ENCODE measurements at regions of chr1 and their contacts with region 1.

Region 1: DNA sequence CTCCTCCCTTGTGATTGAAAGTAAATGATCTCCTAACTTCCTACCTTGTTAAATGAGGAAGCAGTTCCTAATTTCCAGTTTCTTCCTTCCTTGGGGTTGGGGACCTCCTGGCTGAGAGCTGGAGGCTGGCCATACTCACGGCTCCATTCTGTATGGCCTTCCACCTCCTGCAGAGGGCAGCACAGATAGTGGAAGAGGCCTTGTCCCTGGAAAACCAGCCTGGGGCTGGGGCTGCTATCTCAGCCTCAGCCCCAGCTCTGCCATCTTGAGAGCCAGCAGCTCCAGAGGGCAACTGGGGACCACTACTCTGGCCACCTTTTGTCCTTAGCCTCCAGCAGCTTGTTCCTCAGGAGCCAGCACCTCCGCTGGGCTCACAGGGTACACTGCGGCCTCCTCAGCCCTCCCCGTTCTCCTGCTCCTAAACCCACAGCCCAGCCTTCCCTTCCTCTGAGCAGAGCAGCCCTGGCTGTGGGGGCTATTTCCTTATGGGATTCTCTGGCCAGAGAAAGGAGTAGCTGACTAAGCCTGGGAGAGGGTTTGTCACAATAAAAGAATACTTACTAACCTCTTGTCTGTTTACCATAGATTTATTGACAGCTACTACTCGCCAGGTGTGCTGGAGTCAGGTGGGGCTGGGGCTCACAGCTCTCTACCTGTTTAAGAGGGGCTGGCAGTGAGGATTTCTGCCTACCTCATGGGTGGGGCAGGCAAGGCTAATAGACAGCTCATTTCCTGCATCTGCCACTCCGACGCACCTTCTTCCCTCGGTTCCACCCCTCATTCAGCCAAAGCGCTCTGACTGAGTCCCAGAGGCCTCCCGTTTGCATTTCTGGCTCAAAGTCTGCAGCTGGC is 6.3 kb downstream of the TMEM234 start:
- DNase-seq: peak; percentile 71
- H3K4me3 Mint-ChIP-seq: no peak overlapping the region
- H3K27ac Mint-ChIP-seq: peak overlapping the region; percentile 72
- H3K4me1 Mint-ChIP-seq: peaks cover 24% of the 10 kb centered on the region
- H3K27me3 Mint-ChIP-seq: no peaks in the 10 kb centered on the region

Region 2: GRCh38 chr1:32144033-32144432 is 71.8 kb before region 1 on chr1:
- CTCF ChIA-PET with region 1: no interaction called
- POLR2A ChIA-PET with region 1: no interaction called
- DNase-seq: no peak
- H3K4me3 Mint-ChIP-seq: no peak overlapping the region
- H3K27ac Mint-ChIP-seq: no peak overlapping the region
- H3K4me1 Mint-ChIP-seq: peaks cover 41% of the 10 kb centered on the region
- H3K27me3 Mint-ChIP-seq: no peaks in the 10 kb centered on the region

Region 3: GRCh38 chr1:32192220-32192948 is 23.5 kb before region 1 on chr1:
- CTCF ChIA-PET with region 1: interaction called, 10 read pairs
- POLR2A ChIA-PET with region 1: interaction called, 5 read pairs
- DNase-seq: no peak
- H3K4me3 Mint-ChIP-seq: no peak overlapping the region
- H3K27ac Mint-ChIP-seq: no peak overlapping the region
- H3K4me1 Mint-ChIP-seq: peaks cover 55% of the 10 kb centered on the region
- H3K27me3 Mint-ChIP-seq: no peaks in the 10 kb centered on the region

Region 4: DNA sequence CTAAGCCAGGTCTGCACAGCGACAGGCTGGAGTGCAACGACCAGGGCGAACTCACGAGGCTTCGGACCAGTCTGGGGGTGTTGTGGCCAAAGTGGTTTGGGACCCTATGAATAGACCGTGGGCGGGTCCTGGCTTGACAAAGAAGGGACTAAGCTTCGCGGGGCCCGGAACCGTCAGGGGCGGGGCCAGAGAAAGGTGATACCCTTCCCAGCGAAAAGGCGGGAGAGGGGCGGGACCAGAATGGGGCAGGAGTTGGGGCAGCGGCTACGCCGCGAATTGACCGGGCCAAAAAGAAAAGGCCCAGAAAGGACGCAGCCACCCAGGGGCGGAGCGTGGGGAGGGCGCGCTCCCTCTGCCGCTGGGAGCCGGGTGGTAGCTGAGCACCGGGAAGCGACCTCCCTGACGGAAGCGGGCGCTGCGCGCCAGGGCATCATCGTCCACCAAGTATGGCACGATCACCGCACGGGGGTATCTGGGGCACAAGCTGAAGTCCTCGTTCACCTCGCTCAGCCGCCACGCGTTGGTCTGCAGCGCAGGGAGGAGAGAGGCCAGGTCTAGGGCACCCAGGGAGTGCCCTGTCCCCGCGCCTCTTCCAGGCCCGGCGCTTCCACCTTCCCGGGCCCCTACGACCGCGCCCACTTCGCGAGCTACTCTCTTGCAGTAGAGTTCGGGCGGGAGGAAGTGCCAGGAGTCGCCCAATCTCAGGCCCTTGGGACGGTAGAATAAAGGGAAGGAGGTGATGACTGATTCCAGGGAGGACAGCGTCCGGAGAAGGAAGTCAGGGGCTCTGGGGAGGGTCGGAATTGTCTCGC is 24.5 kb after region 1 on chr1:
- CTCF ChIA-PET with region 1: interaction called, 10 read pairs
- POLR2A ChIA-PET with region 1: interaction called, 14 read pairs
- DNase-seq: peak; percentile 54
- H3K4me3 Mint-ChIP-seq: peak overlapping the region; percentile 78
- H3K27ac Mint-ChIP-seq: no peak overlapping the region
- H3K4me1 Mint-ChIP-seq: peaks cover 19% of the 10 kb centered on the region
- H3K27me3 Mint-ChIP-seq: no peaks in the 10 kb centered on the region

Region 5: GRCh38 chr1:32291708-32292492 is 76.0 kb after region 1 on chr1 and contains the start of gene HDAC1:
- CTCF ChIA-PET with region 1: interaction called, 10 read pairs
- POLR2A ChIA-PET with region 1: interaction called, 7 read pairs
- DNase-seq: peak; percentile 98
- H3K4me3 Mint-ChIP-seq: peak within 1 kb of the TSS; percentile 91
- H3K27ac Mint-ChIP-seq: peak within 1 kb of the TSS; percentile 84
- H3K4me1 Mint-ChIP-seq: peaks cover 53% of the 10 kb centered on the region
- H3K27me3 Mint-ChIP-seq: no peaks in the 10 kb centered on the region
- total RNA-seq, gene HDAC1: 180 to 185 TPM

Region 6: GRCh38 chr1:32394141-32394889 is 178.5 kb after region 1 on chr1 and contains the start of gene BSDC1:
- CTCF ChIA-PET with region 1: interaction called, 24 read pairs
- POLR2A ChIA-PET with region 1: interaction called, 3 read pairs
- DNase-seq: peak; percentile 99
- H3K4me3 Mint-ChIP-seq: peak within 1 kb of the TSS; percentile 100
- H3K27ac Mint-ChIP-seq: peak within 1 kb of the TSS; percentile 98
- H3K4me1 Mint-ChIP-seq: peaks cover 30% of the 10 kb centered on the region
- H3K27me3 Mint-ChIP-seq: peaks cover 13% of the 10 kb centered on the region
- total RNA-seq, gene BSDC1: 52.5 to 52.6 TPM

Region 7: DNA sequence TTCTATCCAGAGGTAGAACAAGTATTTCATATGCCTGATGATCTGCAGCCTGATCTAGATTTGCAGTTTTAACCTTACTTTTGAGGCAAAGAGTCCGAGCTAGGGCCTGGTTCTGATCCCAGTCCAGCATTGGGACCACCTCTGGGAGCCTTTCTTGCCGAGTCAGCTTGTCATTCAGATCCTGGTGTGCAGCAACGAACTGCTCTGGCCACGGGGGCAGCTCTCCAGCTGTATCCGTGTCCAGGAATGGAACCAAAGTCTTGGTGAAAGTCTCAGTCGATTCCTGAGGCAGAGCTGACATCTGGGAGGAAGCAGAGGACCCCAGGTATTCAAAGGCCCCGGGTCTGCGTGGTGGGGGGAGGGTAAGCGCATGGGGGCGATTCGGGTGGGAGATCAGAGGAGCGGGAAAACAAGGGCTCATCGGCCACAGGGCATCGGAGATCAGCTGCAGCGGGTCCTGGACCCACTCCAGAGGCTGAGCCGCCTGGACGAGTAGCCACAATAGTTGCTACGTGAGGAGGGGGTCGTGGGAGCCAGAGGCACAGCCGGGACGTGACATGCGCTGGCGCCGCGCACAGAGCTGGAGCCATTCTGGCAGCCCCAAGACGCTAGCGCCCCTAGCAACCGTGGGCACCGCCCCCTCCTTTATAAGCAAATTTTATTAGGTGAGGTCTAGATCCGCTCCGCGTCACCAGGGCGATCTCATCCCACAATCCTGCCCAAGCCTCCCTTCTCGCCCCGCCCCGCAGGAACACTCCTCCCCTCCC is 210.8 kb after region 1 on chr1:
- CTCF ChIA-PET with region 1: interaction called, 11 read pairs
- POLR2A ChIA-PET with region 1: no interaction called
- DNase-seq: no peak
- H3K4me3 Mint-ChIP-seq: no peak overlapping the region
- H3K27ac Mint-ChIP-seq: no peak overlapping the region
- H3K4me1 Mint-ChIP-seq: no peaks in the 10 kb centered on the region
- H3K27me3 Mint-ChIP-seq: peaks cover 55% of the 10 kb centered on the region

Region 8: DNA sequence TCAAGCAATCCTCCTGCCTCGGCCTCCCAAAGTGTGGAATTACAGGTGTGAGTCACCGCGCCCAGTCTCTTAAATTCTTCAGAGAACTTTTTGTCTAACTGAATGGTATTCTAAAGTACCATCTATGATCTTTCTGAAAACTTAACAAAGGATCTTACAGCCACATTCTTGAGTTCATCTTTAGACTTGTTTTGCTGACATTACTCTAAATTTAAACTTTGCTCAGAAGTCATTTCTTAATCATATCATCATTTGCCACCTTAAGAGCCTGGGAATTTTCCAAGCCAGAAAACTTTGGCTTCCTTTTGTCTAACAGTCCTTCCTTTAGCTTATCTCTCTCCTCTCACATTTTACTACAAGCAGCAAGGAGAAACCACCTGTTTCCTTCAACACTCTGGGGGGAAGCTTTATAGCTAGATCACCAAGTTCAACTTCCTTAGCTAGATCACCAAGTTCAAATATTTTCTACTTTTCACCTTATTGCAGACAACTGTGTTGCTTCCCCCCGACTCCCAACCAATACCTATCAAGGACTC is 318.0 kb after region 1 on chr1:
- CTCF ChIA-PET with region 1: no interaction called
- POLR2A ChIA-PET with region 1: no interaction called
- DNase-seq: no peak
- H3K4me3 Mint-ChIP-seq: no peak overlapping the region
- H3K27ac Mint-ChIP-seq: no peak overlapping the region
- H3K4me1 Mint-ChIP-seq: peaks cover under 1% of the 10 kb centered on the region
- H3K27me3 Mint-ChIP-seq: peaks cover 48% of the 10 kb centered on the region

Measured in activated CD4-positive, alpha-beta memory T cell treated with anti-CD3 and anti-CD28 coated beads, Interleukin-2, amount 10 ng/mL, durations not matched to agents 7 days and 5 days (primary cell).